Activated CD4-positive, alpha-beta T cell treated with anti-CD3 and anti-CD28 coated beads, Interleukin-2, amount 10 ng/mL, durations not matched to agents 24 days and 14 days (primary cell): ENCODE measurements at regions of chr17 and their contacts with region 1.

Region 1: DNA sequence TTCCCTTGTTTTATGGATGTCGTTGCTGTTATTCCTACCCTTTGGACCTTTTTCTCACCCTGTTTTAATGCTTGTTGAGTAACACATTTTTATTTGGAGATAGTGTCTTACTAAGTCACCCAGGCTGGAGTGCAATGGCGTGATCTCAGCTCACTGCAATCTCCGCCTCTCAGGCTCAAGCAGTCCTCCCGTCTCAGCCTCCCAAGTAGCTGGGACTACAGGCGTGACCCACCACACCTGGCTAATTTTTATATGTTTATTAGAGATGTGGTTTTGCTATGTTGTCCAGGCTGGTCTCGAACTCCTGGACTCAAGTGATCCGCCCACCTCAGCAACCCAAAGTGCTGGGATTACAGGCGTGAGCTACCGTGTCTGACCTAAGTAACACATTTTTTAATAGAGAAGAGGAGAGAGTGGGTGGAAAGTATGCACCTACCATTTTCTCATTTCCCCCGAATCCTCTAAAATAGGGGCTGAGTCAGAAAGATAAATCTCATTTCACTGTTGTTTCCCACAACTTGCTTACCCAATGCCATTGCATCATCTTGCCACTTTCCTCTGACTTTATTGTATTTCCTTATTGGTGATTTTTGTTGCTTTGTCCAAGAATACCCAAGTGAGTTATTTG is 7.0 kb downstream of the DHX40 start:
- DNase-seq: no peak
- H3K4me3 Mint-ChIP-seq: no peak overlapping the region
- H3K27ac Mint-ChIP-seq: peak overlapping the region; percentile 68
- H3K4me1 Mint-ChIP-seq: peaks cover 11% of the 10 kb centered on the region
- H3K27me3 Mint-ChIP-seq: no peaks in the 10 kb centered on the region

Region 2: DNA sequence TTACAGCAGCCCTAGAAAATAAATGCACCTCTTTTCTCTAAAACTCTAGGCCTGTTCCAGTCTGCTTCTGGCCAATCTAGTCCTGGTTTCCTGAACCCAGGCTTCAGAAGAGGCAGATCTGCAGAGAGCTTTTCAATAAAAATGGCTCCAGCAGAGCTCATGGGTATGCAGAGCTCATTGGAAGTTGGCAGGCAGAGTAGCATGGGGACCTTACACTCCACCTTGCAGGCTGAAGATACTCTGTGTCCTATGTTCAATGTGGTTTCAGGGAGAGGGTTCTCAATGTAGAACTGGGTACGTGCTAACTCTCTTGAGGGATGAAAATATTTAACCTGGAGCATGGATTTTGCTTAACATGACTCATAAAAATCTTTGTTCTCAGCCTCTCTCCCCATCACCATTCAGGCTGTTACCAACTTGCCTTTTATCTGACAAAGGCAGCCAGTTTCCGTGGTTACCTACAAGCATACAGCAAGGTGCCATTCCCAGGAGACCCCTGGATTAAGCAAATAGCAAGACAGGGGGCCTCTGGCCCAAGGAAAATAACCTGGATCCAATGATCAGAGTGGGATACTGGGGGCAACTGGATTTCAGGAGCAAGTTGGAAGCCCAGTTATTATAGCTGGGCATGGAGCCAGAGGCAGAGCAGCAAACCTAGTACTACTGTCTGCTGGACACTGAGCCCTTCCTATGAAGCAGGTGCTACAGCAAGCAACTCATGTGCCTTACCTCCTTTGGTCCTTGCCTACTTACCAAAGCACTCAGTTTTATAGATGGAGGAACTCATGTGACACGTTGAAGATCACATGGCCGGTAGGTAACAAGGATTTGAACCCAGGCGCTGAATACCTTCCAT is 105.2 kb before region 1 on chr17:
- intact Hi-C with region 1: no loop called
- DNase-seq: no peak
- H3K4me3 Mint-ChIP-seq: no peak overlapping the region
- H3K27ac Mint-ChIP-seq: no peak overlapping the region
- H3K4me1 Mint-ChIP-seq: peaks cover 15% of the 10 kb centered on the region
- H3K27me3 Mint-ChIP-seq: no peaks in the 10 kb centered on the region

Region 3: GRCh38 chr17:59542960-59543635 is 29.3 kb before region 1 on chr17:
- intact Hi-C with region 1: no loop called
- DNase-seq: no peak
- H3K4me3 Mint-ChIP-seq: no peak overlapping the region
- H3K27ac Mint-ChIP-seq: no peak overlapping the region
- H3K4me1 Mint-ChIP-seq: no peaks in the 10 kb centered on the region
- H3K27me3 Mint-ChIP-seq: peaks cover 24% of the 10 kb centered on the region

Region 4: DNA sequence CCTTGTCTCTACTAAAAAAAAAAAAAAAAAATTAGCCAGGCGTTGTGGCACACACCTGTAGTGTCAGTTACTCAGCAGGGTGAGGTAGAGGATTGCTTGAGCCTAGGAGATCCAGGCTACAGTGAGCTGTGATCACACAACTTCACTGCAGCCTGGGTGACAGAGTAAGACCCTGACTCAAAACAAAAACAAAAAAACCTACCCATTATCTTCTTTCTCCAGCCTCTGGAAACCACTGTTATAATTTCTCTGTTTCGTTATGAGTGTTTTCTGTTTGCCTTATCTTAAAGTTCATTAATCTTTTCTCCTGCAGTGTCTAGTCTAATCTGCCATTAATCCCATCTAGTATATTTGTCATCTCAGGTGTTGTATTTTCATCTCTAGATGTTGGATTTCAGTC is 28.7 kb after region 1 on chr17:
- intact Hi-C with region 1: loop called (anchors 2 kb)
- DNase-seq: no peak
- H3K4me3 Mint-ChIP-seq: no peak overlapping the region
- H3K27ac Mint-ChIP-seq: peak overlapping the region; percentile 63
- H3K4me1 Mint-ChIP-seq: peaks cover 8% of the 10 kb centered on the region
- H3K27me3 Mint-ChIP-seq: no peaks in the 10 kb centered on the region